ENCODE measurements at regions of chrX and their contacts with region 1.

Region 1: DNA sequence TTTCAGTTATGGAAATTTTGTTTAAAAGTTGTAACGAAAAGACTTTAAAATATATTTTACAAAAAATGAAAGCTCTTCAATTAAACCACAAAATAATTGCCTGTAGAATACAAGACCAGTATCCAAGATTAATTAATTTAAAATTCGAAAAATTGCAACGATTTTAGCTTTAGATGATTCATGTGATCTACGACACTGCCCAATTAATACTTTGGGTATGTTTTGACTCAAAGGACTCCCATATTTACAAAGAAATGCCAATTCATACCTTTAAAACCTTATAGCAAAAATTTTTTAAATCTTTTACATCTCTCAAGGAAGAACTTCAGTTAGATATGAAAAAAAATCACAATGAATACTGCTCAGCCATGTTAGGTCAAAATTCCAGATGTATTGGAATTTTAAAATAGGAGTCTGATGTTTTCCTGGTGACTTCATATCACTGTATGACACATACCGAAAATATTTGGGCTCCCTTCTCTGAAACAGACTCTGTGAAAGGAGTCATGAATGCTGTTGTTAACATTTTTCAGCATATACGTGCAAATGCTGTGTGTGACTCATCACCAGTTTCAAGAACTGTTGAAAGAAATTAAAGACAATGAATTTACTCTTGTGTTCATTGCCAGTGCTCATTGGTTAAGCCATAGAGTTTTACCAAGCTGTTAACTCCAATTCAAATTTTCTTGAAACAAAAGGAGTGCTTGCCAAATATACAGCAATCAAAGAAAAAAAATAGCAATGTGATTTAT is 13.8 kb upstream of the SMS start:
- DNase-seq: no peak
- ATAC-seq: peak; percentile 76
- H3K4me3 ChIP-seq: no peak overlapping the region
- H3K27ac ChIP-seq: no peak overlapping the region
- H3K4me1 ChIP-seq: no peaks in the 10 kb centered on the region
- H3K27me3 ChIP-seq: no peaks in the 10 kb centered on the region

Region 2: GRCh38 chrX:21839334-21840192 is 87.1 kb before region 1 on chrX and contains the start of gene MBTPS2:
- intact Hi-C with region 1: loop called in 1 of 2 experiments (anchors 5 kb)
- DNase-seq: peak; percentile 90 to 93
- ATAC-seq: peak; percentile 95
- H3K4me3 ChIP-seq: peak within 1 kb of the TSS; percentile 38 to 54
- H3K27ac ChIP-seq: peak within 1 kb of the TSS in 1 of 2 donors; percentile 56
- H3K4me1 ChIP-seq: no peaks in the 10 kb centered on the region
- H3K27me3 ChIP-seq: no peaks in the 10 kb centered on the region
- total RNA-seq, gene MBTPS2: 13.5 to 14.6 TPM

Region 3: GRCh38 chrX:21870494-21870893 is 56.2 kb before region 1 on chrX:
- intact Hi-C with region 1: loop called in 1 of 2 experiments (anchors 10 kb)
- DNase-seq: no peak
- ATAC-seq: no peak
- H3K4me3 ChIP-seq: no peak overlapping the region
- H3K27ac ChIP-seq: no peak overlapping the region
- H3K4me1 ChIP-seq: peaks cover 0 to 2% of the 10 kb centered on the region in 2 donors
- H3K27me3 ChIP-seq: no peaks in the 10 kb centered on the region